ENCODE measurements at regions of chr1 and their contacts with region 1.

Region 1: GRCh38 chr1:114660224-114660623 is 9.6 kb downstream of the DENND2C start:
- DNase-seq: no peak
- ATAC-seq: no peak
- H3K4me3 ChIP-seq: no peak overlapping the region
- H3K27ac ChIP-seq: no peak overlapping the region
- H3K4me1 ChIP-seq: no peaks in the 10 kb centered on the region
- H3K27me3 ChIP-seq: no peaks in the 10 kb centered on the region
- CTCF ChIP-seq: no peak

Region 2: DNA sequence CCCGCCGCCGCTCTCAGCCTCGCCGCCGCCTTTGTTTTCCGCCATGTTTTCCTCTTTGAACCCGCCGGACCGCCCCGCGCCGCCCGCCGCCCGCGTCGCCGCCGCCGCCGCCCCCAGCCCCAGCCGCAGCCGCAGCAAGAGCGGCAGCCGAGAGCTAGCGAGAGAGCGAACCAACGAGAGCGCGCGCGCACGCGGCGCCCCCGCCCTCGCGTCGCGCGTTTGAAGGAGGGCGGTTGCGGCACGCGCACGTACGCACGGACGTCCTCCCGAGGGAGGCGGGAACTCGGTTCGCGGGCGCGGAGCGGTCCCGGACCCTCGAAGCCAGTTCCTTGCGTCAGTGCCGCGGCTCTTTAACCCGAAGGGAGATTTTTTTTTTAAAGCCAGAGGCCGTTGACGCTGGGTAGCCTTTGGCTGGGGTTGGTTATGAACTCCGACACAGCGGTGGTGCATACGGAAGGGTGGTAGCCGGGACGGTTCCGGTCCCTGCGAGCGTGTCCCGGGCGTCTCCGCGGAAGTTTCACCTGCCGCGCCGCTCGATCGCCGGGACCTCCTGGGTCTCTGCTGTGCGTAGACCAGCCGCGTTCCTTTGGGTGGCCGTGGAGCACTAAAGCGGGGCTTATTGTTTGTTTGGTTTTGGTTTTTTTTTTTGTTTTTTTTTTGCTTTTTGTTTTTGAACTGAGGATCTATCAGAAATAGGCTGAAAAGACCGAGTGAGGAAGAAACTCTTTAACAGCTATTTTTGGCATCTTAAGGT is 149.0 kb before region 1 on chr1 and contains the start of gene TRIM33:
- CTCF ChIA-PET with region 1: no interaction called
- POLR2A ChIA-PET with region 1: no interaction called
- intact Hi-C with region 1: no loop called
- DNase-seq: peak; percentile 97
- ATAC-seq: peak; percentile 72
- H3K4me3 ChIP-seq: peak within 1 kb of the TSS; percentile 90
- H3K27ac ChIP-seq: peak within 1 kb of the TSS; percentile 62
- H3K4me1 ChIP-seq: peaks cover 21% of the 10 kb centered on the region
- H3K27me3 ChIP-seq: no peaks in the 10 kb centered on the region
- CTCF ChIP-seq: no peak
- total RNA-seq, gene TRIM33: 28.8 and 36.7 TPM in 2 replicates

Region 3: GRCh38 chr1:114620419-114620818 is 39.8 kb before region 1 on chr1:
- CTCF ChIA-PET with region 1: no interaction called
- POLR2A ChIA-PET with region 1: no interaction called
- intact Hi-C with region 1: loop called (anchors 5 kb)
- DNase-seq: no peak
- ATAC-seq: no peak
- H3K4me3 ChIP-seq: no peak overlapping the region
- H3K27ac ChIP-seq: no peak overlapping the region
- H3K4me1 ChIP-seq: no peaks in the 10 kb centered on the region
- H3K27me3 ChIP-seq: no peaks in the 10 kb centered on the region
- CTCF ChIP-seq: peak; percentile 29; the same call in 1 of the 2 replicates

Measured in PC-3 (cell line).